Activated CD4-positive, alpha-beta memory T cell treated with anti-CD3 and anti-CD28 coated beads for 36 hours (primary cell): ENCODE measurements at regions of chr15 and their contacts with region 1.

Region 1: GRCh38 chr15:38671675-38672254 is 107.2 kb upstream of the RASGRP1 start:
- DNase-seq: peak; percentile 71
- H3K4me3 Mint-ChIP-seq: peak overlapping the region; percentile 66
- H3K27ac Mint-ChIP-seq: peak overlapping the region; percentile 97
- H3K4me1 Mint-ChIP-seq: peaks cover 78% of the 10 kb centered on the region
- H3K27me3 Mint-ChIP-seq: no peaks in the 10 kb centered on the region

Region 2: GRCh38 chr15:38148471-38148870 is 523.3 kb before region 1 on chr15:
- CTCF ChIA-PET with region 1: no interaction called
- POLR2A ChIA-PET with region 1: no interaction called
- intact Hi-C with region 1: no loop called
- DNase-seq: no peak
- H3K4me3 Mint-ChIP-seq: no peak overlapping the region
- H3K27ac Mint-ChIP-seq: no peak overlapping the region
- H3K4me1 Mint-ChIP-seq: no peaks in the 10 kb centered on the region
- H3K27me3 Mint-ChIP-seq: peaks cover 2% of the 10 kb centered on the region

Region 3: GRCh38 chr15:38554354-38554753 is 117.4 kb before region 1 on chr15:
- CTCF ChIA-PET with region 1: interaction called, 3 read pairs
- POLR2A ChIA-PET with region 1: interaction called, 133 read pairs
- intact Hi-C with region 1: no loop called
- DNase-seq: peak; percentile 72
- H3K4me3 Mint-ChIP-seq: peak overlapping the region; percentile 15
- H3K27ac Mint-ChIP-seq: peak overlapping the region; percentile 99
- H3K4me1 Mint-ChIP-seq: peaks cover 89% of the 10 kb centered on the region
- H3K27me3 Mint-ChIP-seq: no peaks in the 10 kb centered on the region

Region 4: GRCh38 chr15:38589502-38589901 is 82.3 kb before region 1 on chr15:
- CTCF ChIA-PET with region 1: no interaction called
- POLR2A ChIA-PET with region 1: no interaction called
- intact Hi-C with region 1: no loop called
- DNase-seq: peak; percentile 46
- H3K4me3 Mint-ChIP-seq: no peak overlapping the region
- H3K27ac Mint-ChIP-seq: peak overlapping the region; percentile 34
- H3K4me1 Mint-ChIP-seq: peaks cover 33% of the 10 kb centered on the region
- H3K27me3 Mint-ChIP-seq: no peaks in the 10 kb centered on the region

Region 5: DNA sequence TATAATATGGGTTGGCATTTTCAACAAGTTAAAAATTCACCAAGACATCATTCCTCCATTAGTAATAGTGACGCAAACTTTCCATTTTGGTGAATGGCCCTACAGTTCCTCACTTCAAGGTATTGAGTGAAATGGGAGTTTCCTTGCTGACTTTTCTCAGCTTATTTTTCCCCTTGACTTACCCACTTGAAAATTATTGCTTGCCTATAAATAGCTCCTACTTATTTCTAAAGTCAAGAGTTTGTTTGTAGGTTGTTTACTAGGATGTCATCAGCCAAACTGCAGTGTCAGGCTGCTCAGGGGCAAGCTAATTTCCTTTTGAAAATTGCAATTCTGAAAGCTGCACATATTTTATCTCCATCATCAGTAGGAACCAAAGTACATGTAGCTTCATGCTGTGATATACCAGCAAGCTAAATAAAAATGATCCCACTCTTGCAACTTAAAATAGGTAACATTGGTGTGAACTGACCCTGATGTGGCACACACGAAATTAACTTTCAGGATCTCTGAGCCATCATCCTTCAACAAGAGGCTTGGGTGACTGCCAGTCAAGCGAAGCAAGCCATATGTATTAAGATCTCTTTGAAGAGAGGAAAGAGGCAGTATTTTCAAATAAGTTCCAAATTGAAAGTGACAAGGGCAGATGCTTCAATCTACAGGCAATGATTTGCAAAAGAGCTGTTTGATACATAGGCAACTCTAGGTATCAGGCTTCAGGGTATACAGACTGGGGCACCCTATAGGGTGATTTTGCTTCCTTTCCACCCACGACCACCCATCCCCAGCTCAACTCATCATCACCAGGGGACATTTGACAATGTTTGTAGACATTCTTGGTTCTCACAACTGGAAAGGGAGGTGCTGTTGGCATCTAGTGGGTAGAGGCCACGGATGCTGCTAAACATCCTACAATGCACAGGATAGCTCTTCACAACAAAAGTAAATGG is 40.4 kb before region 1 on chr15:
- CTCF ChIA-PET with region 1: no interaction called
- POLR2A ChIA-PET with region 1: interaction called, 13 read pairs
- intact Hi-C with region 1: loop called (anchors 1 kb)
- DNase-seq: no peak
- H3K4me3 Mint-ChIP-seq: no peak overlapping the region
- H3K27ac Mint-ChIP-seq: peak overlapping the region; percentile 87
- H3K4me1 Mint-ChIP-seq: peaks cover 39% of the 10 kb centered on the region
- H3K27me3 Mint-ChIP-seq: no peaks in the 10 kb centered on the region

Region 6: DNA sequence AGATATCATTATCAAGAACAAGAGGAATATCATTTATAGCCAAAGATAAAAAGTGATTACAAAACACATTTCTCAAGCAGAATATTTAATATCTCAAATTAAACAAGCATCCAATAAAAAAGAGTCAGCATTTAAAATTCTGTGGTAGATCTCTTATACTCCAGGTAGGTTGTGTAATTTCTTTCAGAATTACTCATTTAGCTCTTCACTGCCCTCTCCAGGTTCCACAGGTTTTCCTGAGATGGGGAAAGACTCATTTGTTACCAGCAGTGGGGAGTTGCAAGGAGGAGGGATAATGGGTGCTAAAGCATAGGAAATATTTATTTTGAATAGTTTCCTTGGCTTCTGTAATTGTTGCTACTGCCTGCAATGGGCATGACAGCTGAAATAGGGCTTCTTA is 24.1 kb before region 1 on chr15:
- CTCF ChIA-PET with region 1: interaction called, 5 read pairs
- POLR2A ChIA-PET with region 1: interaction called, 12 read pairs
- intact Hi-C with region 1: no loop called
- DNase-seq: no peak
- H3K4me3 Mint-ChIP-seq: no peak overlapping the region
- H3K27ac Mint-ChIP-seq: no peak overlapping the region
- H3K4me1 Mint-ChIP-seq: peaks cover 74% of the 10 kb centered on the region
- H3K27me3 Mint-ChIP-seq: no peaks in the 10 kb centered on the region

Region 7: DNA sequence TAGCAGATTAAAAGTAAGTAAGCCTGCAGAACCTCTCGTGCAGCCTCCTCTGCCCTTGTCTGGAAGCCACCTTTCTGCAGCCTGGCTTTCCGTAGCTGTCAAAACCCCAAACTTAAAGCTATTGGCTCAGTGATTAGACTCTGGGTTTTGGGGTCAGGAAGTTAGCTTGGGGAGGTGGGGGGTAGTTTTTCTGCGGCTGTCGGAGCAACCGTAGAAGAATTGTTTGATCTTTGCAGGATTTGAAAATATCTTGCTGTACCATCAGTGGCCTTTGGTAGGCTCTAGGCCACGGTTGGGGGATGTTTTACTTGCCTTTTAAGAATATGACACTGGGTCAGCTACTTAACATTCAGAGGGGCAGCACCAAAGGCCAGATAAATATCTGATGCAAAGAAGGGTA is 18.8 kb before region 1 on chr15:
- CTCF ChIA-PET with region 1: interaction called, 6 read pairs
- POLR2A ChIA-PET with region 1: interaction called, 12 read pairs
- intact Hi-C with region 1: loop called (anchors 1 kb)
- DNase-seq: peak; percentile 83
- H3K4me3 Mint-ChIP-seq: peak overlapping the region; percentile 77
- H3K27ac Mint-ChIP-seq: peak overlapping the region; percentile 93
- H3K4me1 Mint-ChIP-seq: peaks cover 77% of the 10 kb centered on the region
- H3K27me3 Mint-ChIP-seq: no peaks in the 10 kb centered on the region

Region 8: GRCh38 chr15:38660738-38661137 is 11.0 kb before region 1 on chr15:
- CTCF ChIA-PET with region 1: interaction called, 3 read pairs
- POLR2A ChIA-PET with region 1: interaction called, 3 read pairs
- intact Hi-C with region 1: loop called (anchors 1 kb)
- DNase-seq: peak; percentile 65
- H3K4me3 Mint-ChIP-seq: peak overlapping the region; percentile 62
- H3K27ac Mint-ChIP-seq: peak overlapping the region; percentile 75
- H3K4me1 Mint-ChIP-seq: peaks cover 77% of the 10 kb centered on the region
- H3K27me3 Mint-ChIP-seq: no peaks in the 10 kb centered on the region